PC-9 (cell line): ENCODE measurements at regions of chr5 and their contacts with region 1.

Region 1: GRCh38 chr5:17069995-17070511 is 134.0 kb upstream of the MYO10 start:
- DNase-seq: peak; percentile 16 to 43
- H3K4me3 ChIP-seq: no peak overlapping the region
- H3K27ac ChIP-seq: no peak overlapping the region
- H3K4me1 ChIP-seq: no peaks in the 10 kb centered on the region
- H3K27me3 ChIP-seq: no peaks in the 10 kb centered on the region
- CTCF ChIP-seq: no peak

Region 2: GRCh38 chr5:17096952-17097695 is 27.1 kb after region 1 on chr5:
- CTCF ChIA-PET with region 1: no interaction called
- POLR2A ChIA-PET with region 1: interaction called, 19 read pairs
- intact Hi-C with region 1: no loop called
- DNase-seq: no peak
- H3K4me3 ChIP-seq: no peak overlapping the region
- H3K27ac ChIP-seq: no peak overlapping the region
- H3K4me1 ChIP-seq: no peaks in the 10 kb centered on the region
- H3K27me3 ChIP-seq: no peaks in the 10 kb centered on the region
- CTCF ChIP-seq: no peak

Region 3: DNA sequence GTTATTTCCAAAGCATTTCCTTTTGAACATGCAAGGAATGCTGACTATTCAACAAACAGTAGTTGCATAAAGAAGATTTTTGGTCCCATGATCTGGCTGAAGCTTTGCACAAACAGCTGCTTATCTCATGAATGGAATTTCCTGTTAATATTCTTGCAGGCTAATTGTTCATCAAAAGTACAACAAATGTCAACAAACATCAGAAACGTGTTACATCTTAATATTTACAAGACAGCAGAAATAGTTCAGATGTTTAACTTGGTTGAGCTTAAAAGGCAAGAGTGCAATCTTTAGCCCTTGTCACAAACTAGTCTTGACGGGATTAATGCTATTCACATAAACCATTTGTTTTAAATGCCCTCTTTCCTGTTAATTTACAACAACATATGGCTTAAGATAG is 99.5 kb after region 1 on chr5:
- CTCF ChIA-PET with region 1: no interaction called
- POLR2A ChIA-PET with region 1: interaction called, 11 read pairs
- intact Hi-C with region 1: no loop called
- DNase-seq: no peak
- H3K4me3 ChIP-seq: no peak overlapping the region
- H3K27ac ChIP-seq: no peak overlapping the region
- H3K4me1 ChIP-seq: no peaks in the 10 kb centered on the region; the same call in 1 of the 2 replicates
- H3K27me3 ChIP-seq: no peaks in the 10 kb centered on the region
- CTCF ChIP-seq: no peak